Prostate gland (tissue), 2 donors: ENCODE measurements at regions of chr17 and their contacts with region 1.

Region 1: DNA sequence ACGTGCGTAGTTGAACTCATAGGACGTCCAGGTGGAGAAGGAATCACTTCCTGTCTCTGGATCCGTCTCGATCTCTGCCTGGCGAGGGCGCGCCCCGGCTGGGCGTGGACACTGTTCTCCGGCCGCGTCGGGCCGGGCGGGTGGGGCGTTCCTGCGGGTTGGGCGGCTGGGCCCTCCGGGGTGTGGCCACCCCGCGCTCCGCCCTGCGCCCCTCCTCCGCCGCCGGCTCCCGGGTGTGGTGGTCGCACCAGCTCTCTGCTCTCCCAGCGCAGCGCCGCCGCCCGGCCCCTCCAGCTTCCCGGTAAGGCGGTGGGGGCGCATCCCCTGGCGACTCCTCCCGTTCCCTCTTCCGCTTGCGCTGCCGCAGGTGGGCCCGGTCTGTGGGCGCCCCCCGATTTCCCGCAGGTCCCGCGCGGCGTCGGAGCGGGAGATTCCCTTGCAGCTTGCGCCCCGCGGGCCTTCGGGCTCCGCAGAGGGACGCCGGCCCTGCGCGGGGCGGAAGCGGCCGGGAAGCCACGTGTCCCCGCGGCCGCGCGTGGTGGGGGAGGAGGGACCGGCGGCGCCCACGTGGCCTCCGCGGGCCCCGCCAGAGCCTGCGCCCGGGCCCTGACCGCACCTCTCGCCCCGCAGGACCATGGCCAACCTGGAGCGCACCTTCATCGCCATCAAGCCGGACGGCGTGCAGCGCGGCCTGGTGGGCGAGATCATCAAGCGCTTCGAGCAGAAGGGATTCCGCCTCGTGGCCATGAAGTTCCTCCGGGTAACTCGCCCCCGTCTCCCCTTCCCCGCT is at the start of gene NME2:
- DNase-seq: peak; percentile 86
- H3K4me3 ChIP-seq: peak within 1 kb of the TSS; percentile 86 to 98
- H3K27ac ChIP-seq: peak within 1 kb of the TSS; percentile 87 to 94
- H3K4me1 ChIP-seq: peaks cover 4% of the 10 kb centered on the region
- H3K27me3 ChIP-seq: no peaks in the 10 kb centered on the region
- CTCF ChIP-seq: no peak
- POLR2A ChIP-seq: peak; percentile 69
- total RNA-seq, gene NME2: 208 to 479 TPM

Region 2: GRCh38 chr17:51120739-51121617 is 45.4 kb before region 1 on chr17 and contains the start of gene SPAG9:
- intact Hi-C with region 1: loop called (anchors 5 kb)
- DNase-seq: peak; percentile 94
- H3K4me3 ChIP-seq: peak within 1 kb of the TSS; percentile 93 to 100
- H3K27ac ChIP-seq: peak within 1 kb of the TSS; percentile 99 to 100
- H3K4me1 ChIP-seq: peaks cover 3% of the 10 kb centered on the region
- H3K27me3 ChIP-seq: no peaks in the 10 kb centered on the region
- CTCF ChIP-seq: peak in 1 of 4 experiments; percentile 23
- POLR2A ChIP-seq: peak; percentile 82
- total RNA-seq, gene SPAG9: 48.3 to 98.3 TPM

Region 3: GRCh38 chr17:51200295-51200694 is 33.9 kb after region 1 on chr17:
- intact Hi-C with region 1: no loop called
- DNase-seq: no peak
- H3K4me3 ChIP-seq: no peak overlapping the region
- H3K27ac ChIP-seq: no peak overlapping the region
- H3K4me1 ChIP-seq: no peaks in the 10 kb centered on the region
- H3K27me3 ChIP-seq: no peaks in the 10 kb centered on the region
- CTCF ChIP-seq: no peak
- POLR2A ChIP-seq: no peak

Region 4: DNA sequence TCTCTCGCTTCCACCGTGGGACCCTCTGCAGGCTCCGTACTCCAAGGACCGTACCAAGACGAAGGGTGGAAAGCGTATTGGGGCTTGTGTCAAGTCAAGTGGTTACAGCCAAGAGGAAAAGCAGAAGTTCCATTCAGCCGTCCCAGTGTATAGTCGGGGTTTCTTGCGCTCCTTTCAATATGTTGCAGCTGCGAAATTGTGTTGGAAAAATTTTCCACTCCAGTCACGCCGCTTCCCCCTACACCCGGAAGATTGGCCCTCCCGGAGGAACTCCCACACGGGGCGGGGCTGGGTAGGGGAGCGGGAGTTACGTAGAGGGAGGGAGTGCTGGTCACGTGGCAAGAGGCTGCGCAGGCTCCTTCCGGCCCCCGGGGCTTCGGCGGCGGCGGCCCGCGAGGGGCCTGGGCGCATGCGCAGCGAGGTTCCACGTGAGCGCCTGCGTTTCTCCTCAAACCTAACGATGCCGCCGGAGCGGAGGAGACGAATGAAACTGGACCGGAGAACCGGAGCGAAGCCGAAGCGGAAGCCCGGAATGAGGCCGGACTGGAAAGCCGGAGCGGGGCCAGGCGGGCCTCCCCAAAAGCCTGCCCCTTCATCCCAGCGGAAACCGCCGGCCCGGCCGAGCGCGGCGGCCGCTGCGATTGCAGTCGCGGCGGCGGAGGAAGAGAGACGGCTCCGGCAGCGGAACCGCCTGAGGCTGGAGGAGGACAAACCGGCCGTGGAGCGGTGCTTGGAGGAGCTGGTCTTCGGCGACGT is 93.9 kb after region 1 on chr17 and contains the start of gene UTP18:
- intact Hi-C with region 1: loop called (anchors 5 kb)
- DNase-seq: peak; percentile 96
- H3K4me3 ChIP-seq: peak within 1 kb of the TSS; percentile 93 to 98
- H3K27ac ChIP-seq: peak within 1 kb of the TSS; percentile 96 to 98
- H3K4me1 ChIP-seq: peaks cover 8% of the 10 kb centered on the region
- H3K27me3 ChIP-seq: no peaks in the 10 kb centered on the region
- CTCF ChIP-seq: peak in 1 of 4 experiments; percentile 21
- POLR2A ChIP-seq: peak; percentile 47
- total RNA-seq, gene UTP18: 27.6 to 43.5 TPM